ENCODE measurements at regions of chr1 and their contacts with region 1.

Region 1: GRCh38 chr1:226608699-226609505 is 60.3 kb downstream of the STUM start:
- H3K4me3 ChIP-seq: no peak overlapping the region
- H3K27ac ChIP-seq: no peak overlapping the region
- H3K4me1 ChIP-seq: no peaks in the 10 kb centered on the region
- CTCF ChIP-seq: peak; percentile 68; the same call in 1 of the 2 replicates

Region 2: DNA sequence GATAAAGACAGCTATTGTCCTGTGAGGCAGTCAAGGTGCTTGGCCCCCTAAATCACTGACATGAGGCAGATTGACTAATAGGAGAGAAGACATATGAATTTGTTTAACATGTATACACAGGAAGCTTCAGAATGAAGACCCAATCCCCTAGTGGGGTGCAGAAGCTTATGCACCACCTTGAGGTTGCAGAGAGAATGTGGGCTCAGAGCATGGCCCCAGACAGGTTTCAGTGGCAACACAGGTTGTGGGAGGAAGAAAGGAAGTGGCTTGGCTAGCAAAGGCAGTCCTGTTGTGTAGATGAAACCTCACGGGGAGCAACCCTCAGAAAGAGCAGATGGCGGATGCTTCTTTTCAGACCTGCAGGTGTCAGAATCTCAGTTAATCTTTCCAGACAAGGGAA is 164.0 kb before region 1 on chr1:
- CTCF ChIA-PET with region 1: no interaction called
- POLR2A ChIA-PET with region 1: no interaction called
- H3K4me3 ChIP-seq: no peak overlapping the region
- H3K27ac ChIP-seq: no peak overlapping the region
- H3K4me1 ChIP-seq: no peaks in the 10 kb centered on the region
- CTCF ChIP-seq: no peak

Region 3: DNA sequence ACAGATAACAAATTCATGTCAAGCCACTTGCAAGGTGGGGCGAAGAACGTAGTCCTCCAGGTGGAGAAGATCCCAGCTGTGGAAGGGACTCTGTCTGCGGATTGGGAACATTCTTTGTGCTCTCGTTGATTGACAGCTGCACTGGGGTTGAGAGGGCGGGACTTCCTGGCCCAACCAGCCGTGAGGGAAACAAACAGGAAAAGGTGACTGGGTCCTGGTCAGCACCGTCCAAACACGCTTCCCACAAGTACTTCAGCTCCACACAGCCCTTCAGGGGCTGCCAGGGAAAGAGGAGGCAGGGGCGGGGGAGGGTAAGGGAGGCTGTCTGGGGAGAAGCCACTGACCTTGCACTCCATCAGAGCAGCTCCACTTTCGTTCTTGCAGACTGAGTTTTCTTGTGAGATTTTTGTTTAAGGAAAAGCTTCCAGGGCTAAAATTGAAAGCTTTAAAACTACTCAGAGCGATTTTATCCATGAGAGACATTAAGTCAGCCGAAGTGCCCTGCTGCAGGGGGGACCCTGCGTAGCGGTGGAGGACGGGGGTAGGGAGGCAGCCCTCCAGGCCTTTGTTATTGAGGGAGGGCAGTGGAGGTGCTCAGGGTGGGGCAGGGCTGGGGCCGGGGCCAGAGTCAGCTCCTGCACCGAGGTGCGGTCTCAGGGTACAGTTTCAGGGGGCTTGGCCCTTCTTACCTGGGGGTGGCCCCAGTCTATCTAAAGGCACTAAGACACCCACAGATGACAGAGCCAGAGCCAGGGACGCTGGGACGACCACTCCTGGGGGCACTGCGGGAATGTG is 81.9 kb before region 1 on chr1:
- CTCF ChIA-PET with region 1: interaction called, 13 read pairs
- POLR2A ChIA-PET with region 1: no interaction called
- H3K4me3 ChIP-seq: no peak overlapping the region
- H3K27ac ChIP-seq: no peak overlapping the region
- H3K4me1 ChIP-seq: no peaks in the 10 kb centered on the region
- CTCF ChIP-seq: no peak

Region 4: DNA sequence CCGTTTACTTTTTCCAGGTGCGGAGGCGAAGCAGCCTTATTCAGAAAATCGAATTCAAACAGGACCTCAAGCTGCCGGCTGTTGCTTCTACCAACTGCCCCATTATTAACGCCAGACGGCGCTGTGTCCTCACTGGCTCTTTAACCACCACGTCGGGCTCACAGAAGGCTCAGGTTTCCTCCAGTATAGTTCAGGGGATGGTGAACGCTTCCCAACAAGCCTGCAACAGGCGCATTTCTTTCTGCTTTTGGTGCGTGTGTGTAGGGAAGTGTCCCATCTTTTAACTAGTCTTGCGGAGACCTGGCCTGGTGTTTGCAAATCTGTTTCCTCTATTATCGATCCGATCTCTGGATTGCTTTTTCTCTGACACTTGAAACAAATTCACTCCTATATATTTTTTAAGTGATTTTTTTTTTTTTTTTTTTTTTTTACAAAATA is 61.1 kb before region 1 on chr1:
- CTCF ChIA-PET with region 1: interaction called, 84 read pairs
- POLR2A ChIA-PET with region 1: no interaction called
- H3K4me3 ChIP-seq: no peak overlapping the region
- H3K27ac ChIP-seq: no peak overlapping the region
- H3K4me1 ChIP-seq: peaks cover 27% of the 10 kb centered on the region
- CTCF ChIP-seq: peak; percentile 97

Region 5: GRCh38 chr1:226584164-226584563 is 24.7 kb before region 1 on chr1:
- CTCF ChIA-PET with region 1: interaction called, 21 read pairs
- POLR2A ChIA-PET with region 1: no interaction called
- H3K4me3 ChIP-seq: no peak overlapping the region
- H3K27ac ChIP-seq: no peak overlapping the region
- H3K4me1 ChIP-seq: no peaks in the 10 kb centered on the region
- CTCF ChIP-seq: no peak

Region 6: GRCh38 chr1:226596531-226597165 is 12.3 kb before region 1 on chr1:
- CTCF ChIA-PET with region 1: interaction called, 17 read pairs
- POLR2A ChIA-PET with region 1: no interaction called
- H3K4me3 ChIP-seq: no peak overlapping the region
- H3K27ac ChIP-seq: no peak overlapping the region
- H3K4me1 ChIP-seq: no peaks in the 10 kb centered on the region
- CTCF ChIP-seq: no peak

Measured in HEK293 (cell line).